ENCODE measurements at regions of chr9 and their contacts with region 1.

Region 1: GRCh38 chr9:129139993-129140396 is 28.8 kb downstream of the PTPA start:
- DNase-seq: peak; percentile 86
- ATAC-seq: peak; percentile 87 to 89
- H3K4me3 ChIP-seq: peak overlapping the region; percentile 65
- H3K27ac ChIP-seq: peak overlapping the region; percentile 100
- H3K4me1 ChIP-seq: peaks cover 78% of the 10 kb centered on the region
- H3K27me3 ChIP-seq: no peaks in the 10 kb centered on the region
- CTCF ChIP-seq: no peak

Region 2: DNA sequence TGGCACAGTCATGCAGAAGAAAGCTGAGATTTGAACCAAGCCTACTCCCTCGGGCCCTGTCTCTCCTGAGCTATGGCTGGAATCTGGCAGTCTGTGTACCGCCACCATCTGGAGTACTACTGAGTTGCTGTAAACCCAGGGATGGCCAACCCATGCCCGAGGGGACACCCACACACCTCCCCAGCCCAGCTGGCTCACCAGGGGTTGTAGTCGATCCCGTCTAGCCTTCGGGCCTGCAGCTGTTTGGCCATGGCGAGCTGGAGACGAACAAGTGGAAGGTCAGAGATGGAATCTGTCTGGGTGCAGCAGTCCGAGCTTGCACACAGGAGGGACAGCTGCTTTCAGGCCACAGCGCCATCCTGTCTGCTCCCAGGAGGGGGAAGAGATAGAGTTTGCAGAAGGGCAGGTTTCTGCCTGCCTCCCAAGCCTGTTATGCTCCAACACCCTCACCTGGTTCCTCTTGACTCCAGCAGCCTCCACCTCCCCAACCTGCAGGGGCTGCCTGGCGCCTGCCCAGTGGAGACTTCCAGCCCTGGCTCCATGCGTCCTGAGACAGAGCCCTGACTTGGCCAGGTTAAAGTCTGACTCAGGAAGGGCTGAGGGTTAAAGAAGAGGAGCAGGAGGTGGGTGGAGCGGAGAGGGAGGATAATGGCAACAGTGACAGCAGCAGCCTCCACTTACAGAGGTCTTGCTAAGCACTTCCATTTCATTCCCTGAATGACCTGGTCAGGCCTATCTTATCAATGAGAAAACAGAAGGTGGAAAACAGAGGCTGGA is 294.7 kb before region 1 on chr9:
- intact Hi-C with region 1: no loop called
- DNase-seq: peak; percentile 8
- ATAC-seq: peak; percentile 19 to 46
- H3K4me3 ChIP-seq: no peak overlapping the region
- H3K27ac ChIP-seq: no peak overlapping the region
- H3K4me1 ChIP-seq: no peaks in the 10 kb centered on the region
- H3K27me3 ChIP-seq: no peaks in the 10 kb centered on the region
- CTCF ChIP-seq: no peak

Region 3: DNA sequence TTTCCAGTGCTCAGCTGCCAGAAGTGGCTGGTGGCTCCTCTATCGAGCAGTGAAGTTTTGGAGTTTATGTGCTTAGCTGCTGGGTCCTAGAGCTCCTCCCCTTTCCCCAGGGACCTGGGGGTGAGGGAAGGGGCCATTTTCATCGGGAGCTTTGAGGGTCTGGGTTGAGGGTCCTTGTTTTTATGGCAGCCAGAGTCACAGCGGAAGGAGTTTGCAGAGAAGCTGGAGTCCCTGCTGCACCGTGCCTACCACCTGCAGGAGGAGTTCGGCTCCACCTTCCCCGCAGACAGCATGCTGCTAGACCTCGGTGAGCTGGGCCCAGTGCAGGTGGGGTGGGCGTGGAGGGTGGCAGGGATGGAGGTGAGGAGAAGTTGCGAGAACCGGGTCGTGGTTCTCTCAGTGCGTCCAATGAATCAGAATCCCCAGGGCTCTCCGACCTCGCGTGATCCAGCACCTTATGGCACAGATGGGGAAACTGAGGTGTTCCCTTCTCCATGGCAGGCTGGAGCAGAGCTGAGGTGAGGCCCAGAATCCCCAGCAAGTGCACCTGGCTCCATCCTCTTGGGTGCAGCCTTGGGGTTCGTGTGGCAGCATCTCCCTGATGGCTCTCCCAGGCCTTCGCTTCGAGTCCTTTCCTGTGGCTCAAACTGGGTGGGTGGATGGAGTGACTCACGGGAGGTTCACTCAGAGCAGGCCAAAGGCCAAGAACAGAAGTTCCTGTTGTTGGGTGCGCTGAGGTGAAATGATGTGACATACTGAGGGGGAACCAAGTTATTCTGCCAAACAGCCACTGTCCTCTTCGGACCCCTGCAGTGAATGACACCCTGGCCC is 80.8 kb before region 1 on chr9:
- intact Hi-C with region 1: no loop called
- DNase-seq: no peak
- ATAC-seq: peak; percentile 46 to 53
- H3K4me3 ChIP-seq: no peak overlapping the region
- H3K27ac ChIP-seq: no peak overlapping the region
- H3K4me1 ChIP-seq: no peaks in the 10 kb centered on the region
- H3K27me3 ChIP-seq: no peaks in the 10 kb centered on the region
- CTCF ChIP-seq: no peak

Region 4: GRCh38 chr9:129081388-129081904 is 58.5 kb before region 1 on chr9:
- intact Hi-C with region 1: no loop called
- DNase-seq: peak; percentile 66
- ATAC-seq: peak; percentile 1 to 4
- H3K4me3 ChIP-seq: peak overlapping the region; percentile 97
- H3K27ac ChIP-seq: peak overlapping the region; percentile 84
- H3K4me1 ChIP-seq: peaks cover 19% of the 10 kb centered on the region
- H3K27me3 ChIP-seq: no peaks in the 10 kb centered on the region
- CTCF ChIP-seq: no peak

Region 5: DNA sequence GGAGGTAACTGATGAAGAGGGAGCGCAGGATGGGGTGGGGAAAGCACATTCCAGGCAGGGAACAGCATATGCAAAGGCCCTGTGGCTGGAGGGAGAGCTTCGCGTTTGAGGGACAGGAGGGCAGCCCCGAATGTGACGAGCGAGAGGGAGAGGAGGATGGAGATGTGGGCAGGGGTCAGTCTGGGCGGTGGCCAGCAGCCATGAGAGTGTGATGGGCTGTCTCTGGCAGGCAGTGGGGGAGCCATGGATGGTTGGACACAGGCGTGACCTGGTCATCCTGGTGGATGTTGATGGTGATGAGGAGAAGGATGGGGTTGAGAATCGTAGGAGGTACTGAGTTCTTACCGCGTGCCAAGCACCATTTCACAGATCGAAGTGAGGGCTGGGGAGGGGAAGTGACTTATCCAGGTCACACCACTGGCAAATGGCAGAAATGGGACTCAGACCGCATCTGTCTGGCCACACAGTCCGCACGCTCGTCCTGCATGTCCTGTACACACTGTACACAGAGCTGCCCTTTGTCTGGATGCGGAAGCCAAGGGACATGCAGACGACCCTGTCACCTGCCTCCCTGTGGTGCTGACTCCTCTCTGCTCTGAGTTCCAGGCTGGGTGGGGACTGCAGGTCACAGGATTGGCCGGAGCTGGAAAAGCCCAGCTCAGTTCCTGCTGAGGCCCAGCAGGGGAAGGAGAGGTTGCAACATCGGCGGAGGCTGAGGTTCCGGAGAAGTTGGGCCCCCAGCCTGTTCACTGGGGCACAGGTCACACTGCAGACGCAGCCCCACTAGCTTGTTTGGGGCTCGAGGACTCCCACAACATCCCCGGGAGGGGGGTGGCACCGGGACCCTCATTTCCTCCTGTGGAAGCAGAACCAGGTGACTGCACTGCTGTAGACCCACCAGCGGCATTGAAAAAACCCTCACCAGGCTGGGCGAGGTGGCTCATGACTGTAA is 203.7 kb after region 1 on chr9:
- intact Hi-C with region 1: no loop called
- DNase-seq: peak; percentile 91
- ATAC-seq: peak; percentile 81 to 86
- H3K4me3 ChIP-seq: no peak overlapping the region
- H3K27ac ChIP-seq: peak overlapping the region; percentile 78
- H3K4me1 ChIP-seq: peaks cover 23% of the 10 kb centered on the region
- H3K27me3 ChIP-seq: no peaks in the 10 kb centered on the region
- CTCF ChIP-seq: no peak

Region 6: DNA sequence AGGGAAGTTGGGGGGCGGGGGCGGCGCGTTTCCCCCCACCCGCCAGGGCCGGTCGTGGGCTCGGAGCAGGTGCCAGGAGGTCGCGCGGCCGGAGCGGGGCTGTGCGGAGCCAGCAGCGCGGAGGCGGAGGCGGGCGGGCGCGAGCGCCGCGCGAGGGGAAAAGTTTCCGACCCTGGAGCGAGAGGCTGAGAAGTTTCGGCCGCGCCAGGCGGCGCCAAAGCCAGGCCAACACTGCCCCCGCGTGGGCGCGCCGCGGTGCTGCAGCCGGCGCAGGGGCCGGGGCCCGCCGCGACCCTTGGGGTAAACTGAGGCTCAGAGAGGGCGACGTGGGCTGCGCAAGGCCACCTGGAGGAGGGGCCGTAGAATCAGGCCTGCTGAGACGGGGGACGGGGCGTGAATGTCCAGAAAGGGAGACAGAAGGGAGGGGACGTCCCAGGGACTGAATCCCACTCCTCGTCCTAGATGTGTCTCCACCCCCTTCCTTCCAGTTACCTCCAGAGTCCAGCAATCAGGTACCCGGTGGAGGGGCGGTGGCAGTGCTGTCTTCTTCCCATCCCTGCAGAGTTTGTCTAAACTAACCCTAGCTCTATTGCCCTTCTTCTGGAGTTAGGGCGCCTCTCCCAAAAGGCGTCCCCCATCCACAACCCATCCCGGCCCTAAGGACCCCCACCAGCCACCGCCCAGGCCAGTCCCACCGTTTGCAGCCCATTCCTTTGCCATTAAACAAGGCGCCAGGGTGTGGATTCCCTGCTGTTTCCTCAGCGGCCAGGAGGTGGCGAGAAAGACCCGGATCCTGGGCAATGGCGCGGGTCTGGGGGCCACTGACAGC is 470.7 kb after region 1 on chr9:
- intact Hi-C with region 1: loop called (anchors 10 kb)
- DNase-seq: peak; percentile 82
- ATAC-seq: peak; percentile 76 to 79
- H3K4me3 ChIP-seq: peak overlapping the region; percentile 62
- H3K27ac ChIP-seq: peak overlapping the region; percentile 82
- H3K4me1 ChIP-seq: peaks cover 35% of the 10 kb centered on the region
- H3K27me3 ChIP-seq: peaks cover 8% of the 10 kb centered on the region
- CTCF ChIP-seq: peak; percentile 91

Measured in lower lobe of right lung (tissue), 2 donors.